Right cardiac atrium (tissue), 5 donors: ENCODE measurements at regions of chr1 and their contacts with region 1.

Region 1: GRCh38 chr1:29245876-29246275 is 9.6 kb downstream of the PTPRU start:
- DNase-seq: no peak
- ATAC-seq: peak in 1 of 2 donors; percentile 19
- H3K4me3 ChIP-seq: no peak overlapping the region
- H3K27ac ChIP-seq: no peak overlapping the region
- H3K4me1 ChIP-seq: no peaks in the 10 kb centered on the region
- H3K27me3 ChIP-seq: no peaks in the 10 kb centered on the region

Region 2: GRCh38 chr1:29341936-29342335 is 96.1 kb after region 1 on chr1:
- intact Hi-C with region 1: loop called in 2 of 4 experiments (anchors 10 kb)
- DNase-seq: no peak
- ATAC-seq: no peak
- H3K4me3 ChIP-seq: no peak overlapping the region
- H3K27ac ChIP-seq: no peak overlapping the region
- H3K4me1 ChIP-seq: no peaks in the 10 kb centered on the region
- H3K27me3 ChIP-seq: no peaks in the 10 kb centered on the region

Region 3: DNA sequence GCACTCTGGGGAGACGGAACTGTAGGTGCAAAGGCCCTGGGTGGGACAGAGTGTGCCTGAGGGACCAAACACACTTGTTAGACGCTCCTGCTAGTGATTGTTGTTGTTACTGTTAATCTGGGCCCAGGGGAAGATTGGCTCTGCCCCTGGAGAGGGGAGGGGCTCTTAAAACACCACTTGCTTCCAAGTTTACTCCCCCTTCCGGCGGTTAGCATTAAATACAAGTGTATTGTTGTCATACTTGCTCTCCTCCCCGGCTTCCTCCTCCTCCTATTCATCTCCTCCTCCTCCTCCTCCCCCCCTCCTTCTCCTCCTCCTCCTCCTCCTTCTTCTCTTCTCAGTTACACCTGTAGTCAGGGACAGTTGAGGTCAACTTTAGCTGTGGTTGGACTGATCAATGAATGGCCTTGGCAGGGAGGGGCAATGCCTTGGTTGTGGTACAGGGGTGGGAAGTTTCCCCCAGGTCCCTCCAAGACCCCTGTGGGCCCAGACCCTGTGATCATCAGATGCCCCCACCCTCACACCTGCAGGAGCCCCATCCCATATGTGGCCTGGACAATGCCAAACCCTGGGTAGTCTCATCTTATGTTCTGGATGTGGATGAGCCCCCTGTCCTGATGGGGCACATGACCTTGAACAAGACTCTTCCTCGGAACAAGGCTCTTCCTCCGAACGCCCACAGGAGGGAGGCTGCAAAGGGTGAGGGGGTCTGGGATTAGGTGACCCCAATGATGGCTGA is 207.8 kb after region 1 on chr1:
- intact Hi-C with region 1: loop called in 1 of 4 experiments (anchors 10 kb)
- DNase-seq: peak in 1 of 3 donors; percentile 66
- ATAC-seq: peak; percentile 49 to 51
- H3K4me3 ChIP-seq: no peak overlapping the region
- H3K27ac ChIP-seq: no peak overlapping the region
- H3K4me1 ChIP-seq: no peaks in the 10 kb centered on the region
- H3K27me3 ChIP-seq: no peaks in the 10 kb centered on the region

Region 4: DNA sequence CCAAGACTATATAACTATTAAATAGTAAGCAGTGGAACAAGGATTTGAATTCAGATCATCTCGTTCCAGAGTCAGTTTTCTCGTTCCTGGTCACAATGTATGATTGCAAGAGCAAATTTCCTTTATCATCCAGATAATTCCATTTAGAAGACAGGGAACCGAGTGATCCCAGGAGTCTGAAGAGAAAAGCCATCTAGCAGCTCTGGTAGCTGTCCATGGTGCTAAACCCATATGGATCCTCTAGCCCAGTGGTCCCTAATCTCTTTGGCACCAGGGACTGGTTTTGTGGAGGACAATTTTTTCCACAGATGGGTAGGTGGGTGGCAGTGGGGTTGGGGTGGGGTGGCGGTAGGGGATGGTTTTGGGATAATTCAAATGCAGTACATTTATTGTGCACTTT is 219.9 kb after region 1 on chr1:
- intact Hi-C with region 1: no loop called
- DNase-seq: no peak
- ATAC-seq: no peak
- H3K4me3 ChIP-seq: no peak overlapping the region
- H3K27ac ChIP-seq: no peak overlapping the region
- H3K4me1 ChIP-seq: no peaks in the 10 kb centered on the region
- H3K27me3 ChIP-seq: no peaks in the 10 kb centered on the region

Region 5: GRCh38 chr1:30106125-30106524 is 860.2 kb after region 1 on chr1:
- intact Hi-C with region 1: loop called in 2 of 4 experiments (anchors 10 kb)
- DNase-seq: peak in 2 of 3 donors; percentile 39 to 71
- ATAC-seq: peak in 1 of 2 donors; percentile 50
- H3K4me3 ChIP-seq: no peak overlapping the region
- H3K27ac ChIP-seq: no peak overlapping the region
- H3K4me1 ChIP-seq: no peaks in the 10 kb centered on the region
- H3K27me3 ChIP-seq: no peaks in the 10 kb centered on the region

Region 6: GRCh38 chr1:30379684-30380624 is 1134.1 kb after region 1 on chr1:
- intact Hi-C with region 1: loop called in 1 of 4 experiments (anchors 10 kb)
- DNase-seq: no peak
- ATAC-seq: peak; percentile 54 to 72
- H3K4me3 ChIP-seq: no peak overlapping the region
- H3K27ac ChIP-seq: no peak overlapping the region
- H3K4me1 ChIP-seq: no peaks in the 10 kb centered on the region
- H3K27me3 ChIP-seq: no peaks in the 10 kb centered on the region

Region 7: GRCh38 chr1:30718636-30719405 is 1472.9 kb after region 1 on chr1:
- intact Hi-C with region 1: loop called in 1 of 4 experiments (anchors 10 kb)
- DNase-seq: peak; percentile 80 to 93 (median 90)
- ATAC-seq: peak; percentile 89
- H3K4me3 ChIP-seq: peak overlapping the region; percentile 19
- H3K27ac ChIP-seq: peak overlapping the region; percentile 96
- H3K4me1 ChIP-seq: no peaks in the 10 kb centered on the region
- H3K27me3 ChIP-seq: no peaks in the 10 kb centered on the region